ENCODE measurements at regions of chr17 and their contacts with region 1.

Region 1: GRCh38 chr17:48047741-48048383 is at the start of gene NFE2L1:
- DNase-seq: peak; percentile 100
- H3K4me3 ChIP-seq: peak within 1 kb of the TSS; percentile 84
- H3K4me3 Mint-ChIP-seq: peak within 1 kb of the TSS; percentile 87
- H3K27ac Mint-ChIP-seq: peak within 1 kb of the TSS; percentile 100
- H3K4me1 ChIP-seq: peaks cover 22% of the 10 kb centered on the region
- H3K4me1 Mint-ChIP-seq: peaks cover 30% of the 10 kb centered on the region
- H3K27me3 ChIP-seq: no peaks in the 10 kb centered on the region
- H3K27me3 Mint-ChIP-seq: no peaks in the 10 kb centered on the region
- CTCF ChIP-seq: no peak
- total RNA-seq, gene NFE2L1: 322 and 356 TPM in 2 replicates

Region 2: GRCh38 chr17:47941236-47941994 is 106.4 kb before region 1 on chr17 and contains the start of gene PNPO:
- CTCF ChIA-PET with region 1: interaction called, 13 read pairs
- POLR2A ChIA-PET with region 1: interaction called, 24 read pairs
- intact Hi-C with region 1: loop called (anchors 1 kb)
- DNase-seq: peak; percentile 100
- H3K4me3 ChIP-seq: peak within 1 kb of the TSS; percentile 69
- H3K4me3 Mint-ChIP-seq: peak within 1 kb of the TSS; percentile 82
- H3K27ac Mint-ChIP-seq: peak within 1 kb of the TSS; percentile 75
- H3K4me1 ChIP-seq: peaks cover 12% of the 10 kb centered on the region; the same call in 1 of the 2 replicates
- H3K4me1 Mint-ChIP-seq: peaks cover 23% of the 10 kb centered on the region
- H3K27me3 ChIP-seq: no peaks in the 10 kb centered on the region
- H3K27me3 Mint-ChIP-seq: no peaks in the 10 kb centered on the region
- CTCF ChIP-seq: peak; percentile 45 to 48
- total RNA-seq, gene PNPO: 110 and 118 TPM in 2 replicates

Region 3: GRCh38 chr17:48030531-48030930 is 17.3 kb before region 1 on chr17:
- CTCF ChIA-PET with region 1: interaction called, 143 read pairs
- POLR2A ChIA-PET with region 1: interaction called, 46 read pairs
- intact Hi-C with region 1: loop called (anchors 1 kb)
- DNase-seq: no peak
- H3K4me3 ChIP-seq: no peak overlapping the region
- H3K4me3 Mint-ChIP-seq: no peak overlapping the region
- H3K27ac Mint-ChIP-seq: no peak overlapping the region
- H3K4me1 ChIP-seq: peaks cover 14% of the 10 kb centered on the region
- H3K4me1 Mint-ChIP-seq: peaks cover 21% of the 10 kb centered on the region
- H3K27me3 ChIP-seq: no peaks in the 10 kb centered on the region
- H3K27me3 Mint-ChIP-seq: no peaks in the 10 kb centered on the region
- CTCF ChIP-seq: no peak

Region 4: GRCh38 chr17:48068491-48068961 is 20.7 kb after region 1 on chr17:
- CTCF ChIA-PET with region 1: interaction called, 57 read pairs
- POLR2A ChIA-PET with region 1: interaction called, 90 read pairs
- intact Hi-C with region 1: loop called (anchors 1 kb)
- DNase-seq: peak; percentile 82 to 87
- H3K4me3 ChIP-seq: no peak overlapping the region
- H3K4me3 Mint-ChIP-seq: peak overlapping the region; percentile 22
- H3K27ac Mint-ChIP-seq: peak overlapping the region; percentile 52
- H3K4me1 ChIP-seq: peaks cover 15% of the 10 kb centered on the region
- H3K4me1 Mint-ChIP-seq: peaks cover 34% of the 10 kb centered on the region
- H3K27me3 ChIP-seq: no peaks in the 10 kb centered on the region
- H3K27me3 Mint-ChIP-seq: no peaks in the 10 kb centered on the region
- CTCF ChIP-seq: peak; percentile 82 to 86

Region 5: DNA sequence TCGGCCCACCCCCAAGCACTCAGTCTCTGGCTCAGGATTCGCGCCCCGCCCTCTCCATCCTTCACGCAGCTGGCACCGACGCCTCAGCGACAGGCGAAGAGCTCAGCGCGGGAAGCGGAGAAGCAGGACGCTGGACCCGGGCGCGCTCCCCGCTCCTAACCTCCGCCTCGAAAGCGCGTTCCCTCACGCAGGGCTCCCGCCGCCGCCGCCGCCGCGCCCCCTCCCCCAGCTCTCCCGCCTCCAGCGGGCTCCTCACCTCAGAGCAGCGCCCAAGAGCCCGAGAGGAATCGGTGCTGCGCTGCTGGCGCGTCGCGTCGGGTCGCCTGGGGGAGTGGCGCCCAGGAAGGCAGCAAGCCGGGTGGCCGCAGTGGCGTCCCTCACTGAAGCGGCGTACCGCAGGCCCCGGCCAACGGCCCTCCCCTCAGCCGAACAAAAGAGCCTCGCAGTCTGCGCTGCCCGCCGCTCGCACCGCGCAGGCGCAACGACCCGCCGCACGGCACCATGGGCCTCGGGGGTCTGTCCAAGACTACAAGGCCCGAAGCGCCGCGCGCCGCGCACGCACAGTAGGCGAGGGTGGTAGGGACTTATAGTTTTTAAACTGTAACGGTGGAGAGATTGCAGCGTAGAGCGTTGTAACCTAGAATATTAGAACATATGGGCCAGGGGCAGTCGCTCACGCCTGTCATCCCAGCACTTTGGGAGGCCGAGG is 53.3 kb after region 1 on chr17 and contains the start of gene CBX1:
- CTCF ChIA-PET with region 1: interaction called, 9 read pairs
- POLR2A ChIA-PET with region 1: interaction called, 42 read pairs
- intact Hi-C with region 1: loop called (anchors 1 kb)
- DNase-seq: peak; percentile 99 to 100
- H3K4me3 ChIP-seq: peak within 1 kb of the TSS; percentile 83
- H3K4me3 Mint-ChIP-seq: peak within 1 kb of the TSS; percentile 93
- H3K27ac Mint-ChIP-seq: peak within 1 kb of the TSS; percentile 79
- H3K4me1 ChIP-seq: peaks cover 8% of the 10 kb centered on the region
- H3K4me1 Mint-ChIP-seq: peaks cover 7% of the 10 kb centered on the region
- H3K27me3 ChIP-seq: no peaks in the 10 kb centered on the region
- H3K27me3 Mint-ChIP-seq: no peaks in the 10 kb centered on the region
- CTCF ChIP-seq: no peak
- total RNA-seq, gene CBX1: 213 and 214 TPM in 2 replicates

Region 6: GRCh38 chr17:48522031-48522653 is 474.3 kb after region 1 on chr17:
- CTCF ChIA-PET with region 1: no interaction called
- POLR2A ChIA-PET with region 1: no interaction called
- intact Hi-C with region 1: no loop called
- DNase-seq: peak; percentile 76 to 91
- H3K4me3 ChIP-seq: no peak overlapping the region
- H3K4me3 Mint-ChIP-seq: peak overlapping the region; percentile 8
- H3K27ac Mint-ChIP-seq: no peak overlapping the region
- H3K4me1 ChIP-seq: peaks cover 35% of the 10 kb centered on the region
- H3K4me1 Mint-ChIP-seq: peaks cover 26% of the 10 kb centered on the region
- H3K27me3 ChIP-seq: no peaks in the 10 kb centered on the region
- H3K27me3 Mint-ChIP-seq: peaks cover 4% of the 10 kb centered on the region
- CTCF ChIP-seq: no peak

Region 7: DNA sequence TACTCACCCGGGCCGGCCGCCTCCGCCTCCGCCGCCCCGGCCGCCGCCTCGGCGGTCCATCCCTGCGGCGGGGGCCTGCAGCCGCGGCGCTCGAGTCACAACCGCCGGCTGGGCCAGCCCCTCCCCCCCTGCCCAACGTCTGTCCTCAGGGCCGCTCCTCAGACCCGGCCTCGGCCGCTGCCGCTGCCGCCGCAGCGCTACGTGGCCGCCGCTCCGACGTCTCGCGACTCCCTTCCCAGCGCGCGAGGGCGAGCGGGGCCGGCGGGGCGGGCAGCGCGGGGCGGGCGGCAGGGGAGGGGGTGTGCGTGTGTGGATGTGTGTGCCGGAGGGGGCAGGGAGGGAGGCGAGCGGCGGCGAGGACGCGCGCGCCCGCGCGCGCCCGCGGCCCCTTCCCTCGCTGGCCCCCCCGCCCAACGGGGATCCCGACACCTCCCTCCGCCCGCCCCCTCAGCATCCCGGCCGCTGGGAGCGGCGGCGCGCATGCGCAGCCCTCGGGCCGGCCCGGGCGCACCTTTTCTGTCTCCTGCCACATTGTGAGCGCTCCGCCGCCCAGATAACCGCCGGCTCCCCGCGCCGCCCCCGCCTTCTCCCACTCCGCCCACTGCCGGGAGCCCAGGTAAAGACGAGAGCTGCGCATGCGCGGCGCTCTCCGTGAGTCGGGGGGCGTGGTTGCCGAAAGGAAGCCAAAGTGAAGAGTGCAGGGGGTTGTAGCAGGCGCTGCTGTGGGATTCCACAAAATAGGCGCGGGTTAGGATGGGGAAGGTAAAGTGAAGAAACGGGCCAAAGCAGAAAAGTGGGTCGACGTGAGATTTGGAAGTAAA is 1314.2 kb after region 1 on chr17 and contains the start of gene ZNF652:
- CTCF ChIA-PET with region 1: no interaction called
- POLR2A ChIA-PET with region 1: no interaction called
- intact Hi-C with region 1: loop called (anchors 5 kb)
- DNase-seq: peak; percentile 100
- H3K4me3 ChIP-seq: peak within 1 kb of the TSS; percentile 64
- H3K4me3 Mint-ChIP-seq: peak within 1 kb of the TSS; percentile 77
- H3K27ac Mint-ChIP-seq: peak within 1 kb of the TSS; percentile 76
- H3K4me1 ChIP-seq: peaks cover 26% of the 10 kb centered on the region
- H3K4me1 Mint-ChIP-seq: peaks cover 27% of the 10 kb centered on the region
- H3K27me3 ChIP-seq: no peaks in the 10 kb centered on the region
- H3K27me3 Mint-ChIP-seq: no peaks in the 10 kb centered on the region
- CTCF ChIP-seq: no peak
- total RNA-seq, gene ZNF652: 89.3 and 92.6 TPM in 2 replicates